OCI-LY7 (cell line): ENCODE measurements at regions of chr4 and their contacts with region 1.

Region 1: DNA sequence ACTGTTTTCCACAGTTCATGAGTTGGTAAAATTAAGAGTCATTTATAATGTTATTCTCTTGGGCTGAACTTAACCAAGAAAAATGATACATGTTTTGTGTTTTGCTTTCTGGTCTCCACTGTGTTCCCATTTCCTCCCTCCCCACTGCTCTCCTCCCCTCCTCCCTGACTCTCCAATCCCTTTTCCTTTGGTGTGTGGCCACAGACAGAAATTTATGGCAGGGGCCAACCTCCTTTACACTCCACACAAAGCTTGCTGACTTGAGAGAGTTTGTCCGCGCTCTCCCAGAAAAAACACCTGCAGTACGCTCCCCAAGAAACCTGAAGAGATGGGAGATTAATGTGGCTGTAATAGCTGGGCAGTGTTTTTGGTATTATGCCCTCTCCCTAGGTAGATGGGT is 88.9 kb downstream of the ALPK1 start:
- DNase-seq: no peak
- H3K4me3 ChIP-seq: no peak overlapping the region
- H3K27ac ChIP-seq: no peak overlapping the region
- H3K4me1 ChIP-seq: no peaks in the 10 kb centered on the region
- CTCF ChIP-seq: no peak

Region 2: GRCh38 chr4:112031712-112032328 is 354.2 kb before region 1 on chr4:
- CTCF ChIA-PET with region 1: no interaction called
- POLR2A ChIA-PET with region 1: no interaction called
- intact Hi-C with region 1: no loop called
- DNase-seq: peak; percentile 29
- H3K4me3 ChIP-seq: no peak overlapping the region
- H3K27ac ChIP-seq: no peak overlapping the region
- H3K4me1 ChIP-seq: no peaks in the 10 kb centered on the region
- CTCF ChIP-seq: peak; percentile 83

Region 3: GRCh38 chr4:112402098-112402497 is 16.0 kb after region 1 on chr4:
- CTCF ChIA-PET with region 1: no interaction called
- POLR2A ChIA-PET with region 1: interaction called, 12 read pairs
- intact Hi-C with region 1: no loop called
- DNase-seq: no peak
- H3K4me3 ChIP-seq: no peak overlapping the region
- H3K27ac ChIP-seq: no peak overlapping the region
- H3K4me1 ChIP-seq: no peaks in the 10 kb centered on the region
- CTCF ChIP-seq: no peak

Region 4: GRCh38 chr4:113316879-113317278 is 930.8 kb after region 1 on chr4:
- CTCF ChIA-PET with region 1: no interaction called
- POLR2A ChIA-PET with region 1: no interaction called
- intact Hi-C with region 1: no loop called
- DNase-seq: peak; percentile 53
- H3K4me3 ChIP-seq: no peak overlapping the region
- H3K27ac ChIP-seq: no peak overlapping the region
- H3K4me1 ChIP-seq: peaks cover 9% of the 10 kb centered on the region
- CTCF ChIP-seq: no peak